ENCODE measurements at regions of chr5 and their contacts with region 1.

Region 1: DNA sequence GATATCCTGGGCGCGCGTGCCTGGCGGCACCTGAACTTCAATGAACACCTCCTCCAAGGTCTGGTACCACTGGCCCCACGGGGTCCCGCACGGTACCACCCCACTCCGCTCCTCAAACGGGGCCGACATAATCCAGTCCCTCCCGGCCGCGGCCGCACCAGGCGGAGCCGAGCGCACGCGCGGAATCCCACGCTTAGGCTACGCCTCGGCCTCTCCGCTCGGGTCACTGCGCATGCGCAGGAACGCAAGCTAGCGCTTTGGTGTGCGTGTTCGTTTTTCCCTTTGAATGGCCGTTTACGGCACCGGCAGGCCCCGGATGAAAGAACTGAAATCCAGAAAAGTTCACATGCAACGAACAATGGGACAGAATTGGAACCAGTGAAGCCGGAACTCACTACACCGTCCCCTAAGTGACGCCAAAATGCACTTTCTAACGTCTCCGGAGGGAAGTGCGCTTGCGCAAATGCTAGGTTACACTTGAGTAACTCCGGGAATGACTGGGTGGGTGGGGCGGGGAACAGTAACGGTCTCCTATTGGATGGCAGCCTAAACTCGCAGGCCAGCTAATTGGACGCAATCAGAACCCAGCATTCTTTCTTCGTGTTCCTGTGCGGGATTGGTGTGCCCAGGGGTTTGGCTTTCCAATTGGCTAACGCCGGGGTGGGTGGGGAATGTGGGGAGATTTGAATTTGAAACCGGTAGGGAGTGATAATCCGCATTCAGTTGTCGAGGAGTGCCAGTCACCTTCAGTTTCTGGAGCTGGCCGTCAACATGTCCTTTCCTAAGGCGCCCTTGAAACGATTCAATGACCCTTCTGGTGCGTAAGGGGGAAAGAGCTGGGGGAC is at the starts of genes HMMR and NUDCD2:
- DNase-seq: peak; percentile 90 to 99 (median 95)

Region 2: DNA sequence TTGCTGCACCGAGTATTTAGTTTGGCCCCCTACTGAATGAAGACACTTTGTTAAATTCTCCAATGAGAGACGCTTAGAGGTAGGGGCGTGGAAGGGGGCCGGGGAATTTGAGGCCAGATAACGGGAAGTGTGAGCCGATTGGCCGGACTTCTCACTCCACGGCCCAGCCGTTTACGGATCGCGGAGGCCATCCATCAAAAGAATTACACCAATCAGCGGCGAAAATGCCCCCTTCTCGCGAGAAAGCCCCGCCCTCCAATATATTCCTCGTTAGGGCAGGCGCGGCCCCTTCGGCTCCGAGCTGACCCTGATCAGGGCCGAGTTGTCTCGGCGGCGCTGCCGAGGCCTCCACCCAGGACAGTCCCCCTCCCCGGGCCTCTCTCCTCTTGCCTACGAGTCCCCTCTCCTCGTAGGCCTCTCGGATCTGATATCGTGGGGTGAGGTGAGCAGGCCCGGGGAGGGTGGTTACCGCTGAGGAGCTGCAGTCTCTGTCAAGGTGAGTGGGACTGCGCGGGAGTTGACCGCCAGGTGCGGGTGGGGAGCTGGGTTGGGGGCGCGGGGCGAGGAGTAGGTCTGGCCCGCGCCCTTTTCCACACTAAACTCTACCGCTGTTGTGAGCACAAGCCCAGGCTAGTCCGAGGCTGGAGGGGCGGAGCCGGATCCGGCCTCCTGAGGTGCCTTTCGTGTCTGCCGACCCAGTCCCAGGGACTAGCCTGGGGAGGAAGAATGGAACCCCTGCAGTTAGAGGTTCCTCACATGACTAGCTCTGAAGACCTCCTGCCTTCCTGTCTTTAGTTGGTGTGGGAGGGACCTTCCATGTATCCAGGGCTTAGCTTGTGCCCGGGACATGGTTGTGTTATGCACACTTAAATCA is 22.6 kb before region 1 on chr5 and contains the start of gene CCNG1:
- intact Hi-C with region 1: loop called (anchors 2 kb)
- DNase-seq: peak; percentile 91 to 99 (median 94)

Region 3: GRCh38 chr5:163505368-163506094 is 45.4 kb after region 1 on chr5 and contains the start of gene MAT2B:
- intact Hi-C with region 1: loop called (anchors 1 kb)
- DNase-seq: peak; percentile 90 to 99 (median 95)

Region 4: GRCh38 chr5:163595932-163596607 is 135.9 kb after region 1 on chr5:
- intact Hi-C with region 1: no loop called
- DNase-seq: peak in 3 of 10 donors; percentile 15 to 75 (median 48)

Measured in posterior cingulate gyrus (tissue), 11 donors.